Activated naive CD4-positive, alpha-beta T cell treated with anti-CD3 and anti-CD28 coated beads for 36 hours (primary cell): ENCODE measurements at regions of chr3 and their contacts with region 1.

Region 1: DNA sequence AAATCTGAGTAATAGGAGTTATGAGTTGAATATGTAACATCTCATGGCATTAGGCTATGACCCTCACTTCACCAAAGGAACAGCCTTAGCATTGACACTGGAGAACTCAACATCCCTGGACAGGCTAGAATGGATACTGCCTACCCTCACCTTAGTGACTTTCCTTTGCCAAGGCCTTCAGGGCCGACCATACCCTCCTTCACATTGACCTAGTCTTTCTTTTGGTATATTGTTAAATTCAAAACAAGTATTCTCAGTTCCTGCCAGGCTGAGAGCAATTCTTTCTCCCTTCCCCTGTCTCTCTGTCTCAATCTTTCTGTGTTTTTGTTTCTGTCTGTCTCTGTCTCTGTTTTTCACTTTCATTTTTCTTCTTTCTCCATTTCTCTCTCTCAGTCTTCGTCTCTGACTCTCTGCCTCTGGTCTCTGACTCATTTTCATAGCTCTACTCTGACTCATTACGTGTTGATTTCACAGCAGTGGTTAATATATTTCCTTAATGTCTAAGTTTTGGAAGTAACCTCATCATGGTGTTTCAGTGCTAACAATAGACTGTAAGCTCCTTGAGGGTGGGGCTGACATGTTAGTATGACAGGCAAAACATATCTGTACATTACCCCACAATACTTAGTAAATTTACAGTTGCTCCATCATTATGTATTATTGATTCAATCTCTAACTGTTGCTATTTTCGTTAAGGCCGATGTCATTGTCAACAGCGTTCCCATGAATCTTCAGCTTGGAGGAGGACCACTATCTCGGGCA is 32.5 kb downstream of the PARP15 start:
- DNase-seq: peak; percentile 51
- H3K4me3 Mint-ChIP-seq: peak overlapping the region; percentile 40
- H3K27ac Mint-ChIP-seq: peak overlapping the region; percentile 90
- H3K4me1 Mint-ChIP-seq: peaks cover 24% of the 10 kb centered on the region
- H3K27me3 Mint-ChIP-seq: no peaks in the 10 kb centered on the region

Region 2: DNA sequence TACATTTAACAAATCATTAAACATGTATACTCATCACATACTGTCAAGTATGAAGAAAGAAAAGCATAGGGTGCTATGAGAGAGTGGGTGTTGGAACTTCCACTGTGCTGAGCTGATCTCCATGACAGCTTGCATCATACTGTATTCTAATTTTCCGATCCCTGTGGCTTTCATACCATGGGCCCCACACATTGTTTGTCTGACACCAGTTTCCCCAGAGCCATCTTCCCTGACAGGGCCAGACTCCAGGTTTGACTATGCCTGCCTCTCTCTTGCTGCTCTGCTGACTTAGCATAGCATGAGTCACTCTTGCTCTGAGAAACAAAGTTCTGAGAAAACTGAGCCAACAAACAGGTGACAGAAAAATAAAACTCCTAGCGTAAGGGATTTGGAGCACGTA is 463.5 kb before region 1 on chr3:
- CTCF ChIA-PET with region 1: no interaction called
- intact Hi-C with region 1: loop called (anchors 2 kb)
- DNase-seq: peak; percentile 86
- H3K4me3 Mint-ChIP-seq: no peak overlapping the region
- H3K27ac Mint-ChIP-seq: peak overlapping the region; percentile 46
- H3K4me1 Mint-ChIP-seq: peaks cover 28% of the 10 kb centered on the region
- H3K27me3 Mint-ChIP-seq: peaks cover 1% of the 10 kb centered on the region

Region 3: GRCh38 chr3:122484985-122485384 is 125.0 kb before region 1 on chr3:
- CTCF ChIA-PET with region 1: no interaction called
- intact Hi-C with region 1: loop called (anchors 1 kb)
- DNase-seq: no peak
- H3K4me3 Mint-ChIP-seq: no peak overlapping the region
- H3K27ac Mint-ChIP-seq: no peak overlapping the region
- H3K4me1 Mint-ChIP-seq: peaks cover 66% of the 10 kb centered on the region
- H3K27me3 Mint-ChIP-seq: no peaks in the 10 kb centered on the region

Region 4: GRCh38 chr3:122533931-122534334 is 76.0 kb before region 1 on chr3:
- CTCF ChIA-PET with region 1: no interaction called
- intact Hi-C with region 1: loop called (anchors 1 kb)
- DNase-seq: peak; percentile 77
- H3K4me3 Mint-ChIP-seq: no peak overlapping the region
- H3K27ac Mint-ChIP-seq: peak overlapping the region; percentile 28
- H3K4me1 Mint-ChIP-seq: peaks cover 35% of the 10 kb centered on the region
- H3K27me3 Mint-ChIP-seq: no peaks in the 10 kb centered on the region

Region 5: GRCh38 chr3:122572940-122573412 is 37.0 kb before region 1 on chr3:
- CTCF ChIA-PET with region 1: no interaction called
- intact Hi-C with region 1: loop called (anchors 1 kb)
- DNase-seq: peak; percentile 75
- H3K4me3 Mint-ChIP-seq: no peak overlapping the region
- H3K27ac Mint-ChIP-seq: peak overlapping the region; percentile 73
- H3K4me1 Mint-ChIP-seq: peaks cover 69% of the 10 kb centered on the region
- H3K27me3 Mint-ChIP-seq: no peaks in the 10 kb centered on the region

Region 6: GRCh38 chr3:122646146-122646988 is 36.4 kb after region 1 on chr3:
- CTCF ChIA-PET with region 1: no interaction called
- intact Hi-C with region 1: loop called (anchors 1 kb)
- DNase-seq: peak; percentile 28
- H3K4me3 Mint-ChIP-seq: peak overlapping the region; percentile 28
- H3K27ac Mint-ChIP-seq: peak overlapping the region; percentile 82
- H3K4me1 Mint-ChIP-seq: peaks cover 31% of the 10 kb centered on the region
- H3K27me3 Mint-ChIP-seq: peaks cover 2% of the 10 kb centered on the region

Region 7: GRCh38 chr3:122893754-122894668 is 284.0 kb after region 1 on chr3:
- CTCF ChIA-PET with region 1: no interaction called
- intact Hi-C with region 1: no loop called
- DNase-seq: no peak
- H3K4me3 Mint-ChIP-seq: no peak overlapping the region
- H3K27ac Mint-ChIP-seq: no peak overlapping the region
- H3K4me1 Mint-ChIP-seq: peaks cover 19% of the 10 kb centered on the region
- H3K27me3 Mint-ChIP-seq: peaks cover 5% of the 10 kb centered on the region

Region 8: GRCh38 chr3:123186695-123187094 is 576.7 kb after region 1 on chr3:
- CTCF ChIA-PET with region 1: no interaction called
- intact Hi-C with region 1: no loop called
- DNase-seq: no peak
- H3K4me3 Mint-ChIP-seq: no peak overlapping the region
- H3K27ac Mint-ChIP-seq: no peak overlapping the region
- H3K4me1 Mint-ChIP-seq: no peaks in the 10 kb centered on the region
- H3K27me3 Mint-ChIP-seq: no peaks in the 10 kb centered on the region

Region 9: DNA sequence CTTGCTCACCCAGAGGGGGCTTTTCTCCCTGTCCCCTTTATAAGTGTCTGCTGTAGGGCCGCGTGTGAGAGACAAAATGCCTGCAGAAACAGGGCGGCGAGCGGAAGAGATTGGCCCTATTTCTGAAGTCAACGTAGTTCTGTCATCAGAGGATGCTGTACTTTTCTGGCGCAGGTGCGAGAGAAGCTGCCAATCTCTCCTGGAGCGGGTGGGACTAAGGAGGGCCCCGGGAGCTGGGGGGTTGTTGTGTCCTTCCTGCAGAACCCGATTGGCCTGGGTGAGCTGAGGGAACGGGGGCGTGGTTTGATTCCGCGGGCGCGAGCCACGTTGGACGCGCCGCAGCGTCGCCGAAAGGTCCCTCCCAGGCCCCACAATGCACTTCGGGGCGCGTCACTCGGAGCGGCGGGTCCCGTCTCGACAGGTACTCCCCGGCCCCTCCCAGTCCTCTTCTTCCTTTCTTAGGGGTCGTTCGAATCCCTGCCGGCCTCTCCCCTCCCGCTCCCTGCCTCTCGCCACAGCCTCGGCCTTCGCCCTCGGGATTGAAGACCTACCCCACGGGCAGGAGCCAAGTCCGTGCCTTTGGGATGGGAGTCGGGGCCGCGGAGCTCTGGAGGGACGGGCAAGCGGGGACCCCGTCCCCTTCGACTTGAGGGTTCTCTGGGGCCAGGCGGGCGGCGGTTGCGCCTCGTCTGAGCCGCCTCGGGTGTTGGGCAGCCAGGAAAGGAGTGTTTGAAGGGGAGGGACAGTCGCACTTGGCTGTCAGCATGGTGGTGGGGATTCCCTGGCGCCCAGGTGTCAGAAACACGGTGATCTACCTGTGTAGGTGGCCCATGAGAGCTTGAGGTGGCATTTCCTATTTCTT is 591.8 kb after region 1 on chr3 and contains the start of gene SEC22A:
- CTCF ChIA-PET with region 1: no interaction called
- intact Hi-C with region 1: loop called (anchors 1 kb)
- DNase-seq: peak; percentile 98
- H3K4me3 Mint-ChIP-seq: peak within 1 kb of the TSS; percentile 95
- H3K27ac Mint-ChIP-seq: peak within 1 kb of the TSS; percentile 95
- H3K4me1 Mint-ChIP-seq: peaks cover 27% of the 10 kb centered on the region
- H3K27me3 Mint-ChIP-seq: no peaks in the 10 kb centered on the region
- total RNA-seq, gene SEC22A: 14.3 to 18.7 TPM